HEK293 (cell line): ENCODE measurements at regions of chr11 and their contacts with region 1.

Region 1: GRCh38 chr11:71086675-71087258 is 165.6 kb downstream of the SHANK2 start:
- H3K4me3 ChIP-seq: no peak overlapping the region
- H3K27ac ChIP-seq: no peak overlapping the region
- H3K4me1 ChIP-seq: no peaks in the 10 kb centered on the region
- CTCF ChIP-seq: 0 out of 2 replicates have a peak, but pooled peaks have one; percentile 17

Region 2: GRCh38 chr11:70926543-70927201 is 160.1 kb before region 1 on chr11:
- CTCF ChIA-PET with region 1: no interaction called
- POLR2A ChIA-PET with region 1: no interaction called
- H3K4me3 ChIP-seq: no peak overlapping the region
- H3K27ac ChIP-seq: no peak overlapping the region
- H3K4me1 ChIP-seq: no peaks in the 10 kb centered on the region
- CTCF ChIP-seq: no peak

Region 3: GRCh38 chr11:70948855-70949569 is 137.8 kb before region 1 on chr11:
- CTCF ChIA-PET with region 1: no interaction called
- POLR2A ChIA-PET with region 1: no interaction called
- H3K4me3 ChIP-seq: no peak overlapping the region
- H3K27ac ChIP-seq: no peak overlapping the region
- H3K4me1 ChIP-seq: no peaks in the 10 kb centered on the region
- CTCF ChIP-seq: no peak

Region 4: DNA sequence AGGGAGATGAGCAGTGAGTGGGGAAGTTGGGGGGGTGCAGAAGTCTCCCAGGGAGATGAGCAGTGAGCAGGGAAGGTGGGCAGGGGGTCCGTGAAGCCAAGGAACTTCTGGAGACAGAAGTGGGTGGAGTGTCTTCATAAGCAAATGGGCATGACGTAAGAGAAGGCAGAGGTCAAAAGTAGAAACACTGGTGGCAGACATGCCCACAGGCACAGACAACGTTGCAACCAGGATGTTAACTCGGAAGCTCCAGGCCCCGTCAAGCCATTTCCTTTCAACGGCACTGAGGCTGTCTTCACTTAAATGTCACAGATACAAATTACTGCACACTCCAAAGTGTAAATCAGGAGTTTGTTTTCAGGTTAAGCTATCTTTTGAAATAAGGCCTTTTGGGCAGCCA is 20.4 kb before region 1 on chr11:
- CTCF ChIA-PET with region 1: no interaction called
- POLR2A ChIA-PET with region 1: no interaction called
- H3K4me3 ChIP-seq: no peak overlapping the region
- H3K27ac ChIP-seq: no peak overlapping the region
- H3K4me1 ChIP-seq: no peaks in the 10 kb centered on the region
- CTCF ChIP-seq: no peak

Region 5: DNA sequence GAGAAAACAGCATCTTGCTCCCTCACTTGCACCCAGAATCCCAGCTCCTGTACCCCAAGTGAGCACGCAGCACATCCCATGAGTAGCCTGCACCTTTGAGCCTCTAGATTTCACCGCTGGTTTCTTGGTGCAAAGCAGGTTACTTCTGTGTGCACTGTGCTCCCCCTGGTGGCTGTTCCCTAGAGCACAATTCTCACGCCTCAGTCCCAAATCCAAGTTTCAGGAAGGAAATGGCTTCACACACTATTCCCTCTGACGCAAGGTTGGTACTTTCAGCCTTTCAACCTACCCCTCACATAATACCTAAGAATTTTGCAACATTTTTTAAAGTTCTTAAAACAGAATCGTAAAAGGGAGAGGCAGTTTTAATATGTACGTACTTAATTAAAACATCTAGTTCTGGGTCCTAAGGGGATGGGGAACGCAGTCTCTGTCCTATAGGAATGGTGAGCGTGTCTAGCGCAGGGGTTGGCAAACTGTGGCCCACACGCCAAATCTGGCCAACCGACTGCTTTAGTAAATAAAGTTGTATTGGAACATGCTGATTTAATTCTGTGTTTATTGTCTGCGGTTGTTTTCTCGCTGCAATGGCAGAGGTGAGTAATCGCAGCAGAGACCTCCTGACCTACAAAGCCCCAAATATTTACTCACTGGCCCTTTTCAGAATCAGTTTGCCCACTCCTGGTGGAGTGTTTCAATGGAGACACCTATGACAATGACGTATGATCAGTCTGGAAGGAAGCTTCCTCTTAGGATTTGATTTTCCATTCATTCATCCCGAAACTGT is 333.9 kb after region 1 on chr11:
- CTCF ChIA-PET with region 1: interaction called, 14 read pairs
- POLR2A ChIA-PET with region 1: no interaction called
- H3K4me3 ChIP-seq: no peak overlapping the region
- H3K27ac ChIP-seq: no peak overlapping the region
- H3K4me1 ChIP-seq: no peaks in the 10 kb centered on the region
- CTCF ChIP-seq: 0 out of 2 replicates have a peak, but pooled peaks have one; percentile 19